ENCODE measurements at regions of chr3 and their contacts with region 1.

Region 1: GRCh38 chr3:184561061-184561912 is at the start of gene EPHB3:
- DNase-seq: peak; percentile 99
- total RNA-seq, gene EPHB3: 3.6 TPM

Region 2: DNA sequence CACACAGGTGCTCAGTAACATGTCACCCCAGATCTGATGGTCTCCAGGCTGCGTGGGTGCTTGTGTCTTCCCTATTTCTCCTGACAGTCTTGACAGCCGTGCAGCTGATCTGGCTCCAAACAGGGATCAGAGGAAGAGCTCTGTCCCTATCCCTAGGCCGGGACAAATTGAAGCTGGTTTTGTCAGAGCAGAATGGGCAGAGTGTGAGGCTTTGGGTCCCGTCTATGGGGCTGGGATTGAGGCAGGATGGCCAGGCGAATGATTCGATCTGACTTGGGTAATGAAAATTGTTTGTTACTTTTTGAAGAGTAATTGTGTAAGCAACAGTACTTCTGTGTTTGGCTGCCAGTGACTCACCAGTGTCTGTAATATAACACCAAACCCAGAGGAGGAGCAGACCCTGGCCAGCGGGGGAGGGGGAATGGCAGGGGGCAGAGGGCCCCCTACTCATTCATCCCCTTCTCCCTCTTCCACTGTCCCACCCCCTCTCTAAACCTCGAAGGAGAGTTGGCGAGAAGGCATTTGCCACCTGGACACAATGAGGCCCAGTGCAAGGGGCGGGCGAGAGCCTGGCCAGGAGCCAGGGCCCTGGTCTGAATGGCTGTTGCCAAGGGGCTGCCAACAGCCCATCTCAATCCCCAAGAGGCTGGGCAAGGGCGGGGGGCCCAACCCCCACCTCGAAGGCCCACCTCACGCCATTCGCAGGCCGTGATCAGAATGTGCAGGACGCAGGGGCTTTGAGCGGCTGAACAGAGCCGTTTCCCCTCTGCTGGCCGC is 155.5 kb after region 1 on chr3:
- intact Hi-C with region 1: loop called (anchors 2 kb)
- DNase-seq: no peak

Region 3: GRCh38 chr3:184727357-184728009 is 166.2 kb after region 1 on chr3:
- intact Hi-C with region 1: loop called (anchors 1 kb)
- DNase-seq: no peak

Region 4: GRCh38 chr3:184777336-184778004 is 216.2 kb after region 1 on chr3:
- intact Hi-C with region 1: loop called (anchors 1 kb)
- DNase-seq: peak; percentile 83